ENCODE measurements at regions of chr1 and their contacts with region 1.

Region 1: DNA sequence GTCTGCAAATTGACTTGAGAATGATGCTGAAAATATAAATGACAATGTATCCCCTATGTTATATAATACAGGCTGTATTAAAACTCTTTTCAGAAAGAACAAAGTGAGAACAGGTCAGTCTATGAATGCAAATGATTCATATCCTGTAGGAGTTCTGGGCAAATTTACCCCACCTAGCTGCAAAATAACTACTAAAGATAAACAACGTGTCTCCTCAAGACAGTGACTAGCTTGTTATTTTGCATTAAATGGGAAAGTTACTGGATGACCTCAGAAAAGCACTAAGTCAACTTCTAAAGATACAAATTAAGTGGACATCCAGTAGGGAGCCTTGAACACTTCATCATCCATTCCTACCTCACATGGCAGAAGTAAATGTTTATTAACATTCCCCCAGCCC is 11.1 kb downstream of the RNF19B start:
- DNase-seq: peak; percentile 20
- H3K4me3 ChIP-seq: peak overlapping the region; percentile 4
- H3K27ac ChIP-seq: peak overlapping the region; percentile 47
- H3K4me1 ChIP-seq: peaks cover 95% of the 10 kb centered on the region
- CTCF ChIP-seq: no peak

Region 2: GRCh38 chr1:32557812-32558211 is 395.7 kb before region 1 on chr1:
- CTCF ChIA-PET with region 1: no interaction called
- POLR2A ChIA-PET with region 1: no interaction called
- intact Hi-C with region 1: no loop called
- DNase-seq: no peak
- H3K4me3 ChIP-seq: no peak overlapping the region
- H3K27ac ChIP-seq: no peak overlapping the region
- H3K4me1 ChIP-seq: no peaks in the 10 kb centered on the region
- CTCF ChIP-seq: no peak

Region 3: DNA sequence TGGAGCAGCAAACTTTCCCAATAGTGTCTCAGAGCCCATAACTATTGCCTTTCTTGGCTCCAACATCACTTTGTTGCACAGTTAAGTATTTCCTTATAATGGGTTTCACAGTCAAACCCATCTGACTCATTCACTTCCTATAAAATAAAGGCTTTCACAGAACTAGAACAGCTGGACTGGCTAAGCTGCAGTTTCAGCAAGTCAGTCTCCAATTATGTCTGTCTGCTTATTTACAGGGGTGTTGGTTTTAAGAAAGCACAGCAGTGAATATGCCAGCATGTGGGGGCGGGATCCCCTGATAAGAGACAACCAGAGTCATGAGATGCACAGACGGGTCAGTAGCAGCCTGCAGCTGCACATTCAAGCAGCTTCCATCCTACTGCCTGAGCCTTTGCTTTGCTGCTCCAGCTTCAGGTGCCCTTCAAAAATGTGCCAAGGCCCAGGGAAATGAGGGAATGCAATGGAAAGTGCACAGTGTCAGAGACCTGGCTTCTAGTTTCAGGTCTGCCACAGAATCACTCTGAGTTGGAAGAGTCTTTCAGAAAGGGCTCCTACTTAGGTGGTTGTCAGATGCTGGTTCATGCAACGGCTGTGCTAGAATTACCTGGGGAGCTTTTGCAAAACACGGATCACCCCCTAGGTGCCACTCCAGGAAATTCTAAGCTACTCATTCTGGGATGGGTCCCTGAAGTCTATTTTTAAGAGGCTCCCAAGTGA is 13.7 kb before region 1 on chr1:
- CTCF ChIA-PET with region 1: no interaction called
- POLR2A ChIA-PET with region 1: interaction called, 26 read pairs
- intact Hi-C with region 1: no loop called
- DNase-seq: no peak
- H3K4me3 ChIP-seq: no peak overlapping the region
- H3K27ac ChIP-seq: no peak overlapping the region
- H3K4me1 ChIP-seq: no peaks in the 10 kb centered on the region
- CTCF ChIP-seq: no peak

Region 4: GRCh38 chr1:32964461-32965250 is 11.2 kb after region 1 on chr1 and contains the start of gene RNF19B:
- CTCF ChIA-PET with region 1: no interaction called
- POLR2A ChIA-PET with region 1: interaction called, 26 read pairs
- intact Hi-C with region 1: no loop called
- DNase-seq: peak; percentile 97
- H3K4me3 ChIP-seq: peak within 1 kb of the TSS; percentile 96
- H3K27ac ChIP-seq: peak within 1 kb of the TSS; percentile 67
- H3K4me1 ChIP-seq: peaks cover 21% of the 10 kb centered on the region
- CTCF ChIP-seq: no peak
- total RNA-seq, gene RNF19B: 21.1 and 23.0 TPM in 2 replicates

Region 5: GRCh38 chr1:32992489-32993323 is 39.2 kb after region 1 on chr1:
- CTCF ChIA-PET with region 1: interaction called, 3 read pairs
- POLR2A ChIA-PET with region 1: interaction called, 10 read pairs
- intact Hi-C with region 1: loop called (anchors 5 kb)
- DNase-seq: peak; percentile 70
- H3K4me3 ChIP-seq: no peak overlapping the region
- H3K27ac ChIP-seq: peak overlapping the region; percentile 54
- H3K4me1 ChIP-seq: peaks cover 28% of the 10 kb centered on the region
- CTCF ChIP-seq: no peak

Region 6: GRCh38 chr1:33014464-33015163 is 61.1 kb after region 1 on chr1:
- CTCF ChIA-PET with region 1: no interaction called
- POLR2A ChIA-PET with region 1: no interaction called
- intact Hi-C with region 1: no loop called
- DNase-seq: no peak
- H3K4me3 ChIP-seq: no peak overlapping the region
- H3K27ac ChIP-seq: no peak overlapping the region
- H3K4me1 ChIP-seq: no peaks in the 10 kb centered on the region
- CTCF ChIP-seq: peak; percentile 31; the same call in 1 of the 2 replicates

Region 7: GRCh38 chr1:33036526-33037503 is 83.3 kb after region 1 on chr1 and contains the start of gene AK2:
- CTCF ChIA-PET with region 1: no interaction called
- POLR2A ChIA-PET with region 1: interaction called, 4 read pairs
- intact Hi-C with region 1: loop called (anchors 5 kb)
- DNase-seq: peak; percentile 96
- H3K4me3 ChIP-seq: peak within 1 kb of the TSS; percentile 86
- H3K27ac ChIP-seq: peak within 1 kb of the TSS; percentile 6
- H3K4me1 ChIP-seq: peaks cover 43% of the 10 kb centered on the region
- CTCF ChIP-seq: no peak
- total RNA-seq, gene AK2: 185 and 223 TPM in 2 replicates

Region 8: DNA sequence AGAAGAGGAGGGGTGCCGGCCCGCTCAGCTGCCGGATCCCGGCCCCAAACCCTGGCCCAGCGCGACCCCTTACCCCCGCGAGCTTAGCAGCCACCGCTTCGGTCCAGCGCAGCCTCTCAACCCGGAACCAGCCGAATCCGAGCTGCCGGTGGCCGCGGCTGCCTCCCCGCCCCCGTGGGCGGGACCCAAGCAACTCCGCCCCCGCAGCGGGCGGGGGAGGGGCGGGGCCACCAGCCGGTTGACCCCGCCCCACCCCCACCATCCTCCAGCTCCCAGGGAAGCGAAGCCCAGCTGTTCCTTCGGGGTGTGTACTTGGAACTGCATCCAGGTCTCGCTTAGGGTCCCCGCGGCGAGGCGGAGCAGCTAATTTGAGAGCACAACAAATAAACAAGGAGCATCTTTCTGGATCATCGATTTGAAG is 228.4 kb after region 1 on chr1 and contains the start of gene TRIM62:
- CTCF ChIA-PET with region 1: no interaction called
- POLR2A ChIA-PET with region 1: no interaction called
- intact Hi-C with region 1: no loop called
- DNase-seq: peak; percentile 88
- H3K4me3 ChIP-seq: peak within 1 kb of the TSS; percentile 74
- H3K27ac ChIP-seq: peak within 1 kb of the TSS; percentile 18
- H3K4me1 ChIP-seq: peaks cover 21% of the 10 kb centered on the region
- CTCF ChIP-seq: no peak
- total RNA-seq, gene TRIM62: 2.0 and 2.4 TPM in 2 replicates

Region 9: GRCh38 chr1:33295450-33296081 is 342.1 kb after region 1 on chr1:
- CTCF ChIA-PET with region 1: no interaction called
- POLR2A ChIA-PET with region 1: no interaction called
- intact Hi-C with region 1: no loop called
- DNase-seq: peak; percentile 77
- H3K4me3 ChIP-seq: no peak overlapping the region
- H3K27ac ChIP-seq: no peak overlapping the region
- H3K4me1 ChIP-seq: no peaks in the 10 kb centered on the region
- CTCF ChIP-seq: peak; percentile 92

Measured in OCI-LY7 (cell line).